BJ (cell line): ENCODE measurements at regions of chr22 and their contacts with region 1.

Region 1: DNA sequence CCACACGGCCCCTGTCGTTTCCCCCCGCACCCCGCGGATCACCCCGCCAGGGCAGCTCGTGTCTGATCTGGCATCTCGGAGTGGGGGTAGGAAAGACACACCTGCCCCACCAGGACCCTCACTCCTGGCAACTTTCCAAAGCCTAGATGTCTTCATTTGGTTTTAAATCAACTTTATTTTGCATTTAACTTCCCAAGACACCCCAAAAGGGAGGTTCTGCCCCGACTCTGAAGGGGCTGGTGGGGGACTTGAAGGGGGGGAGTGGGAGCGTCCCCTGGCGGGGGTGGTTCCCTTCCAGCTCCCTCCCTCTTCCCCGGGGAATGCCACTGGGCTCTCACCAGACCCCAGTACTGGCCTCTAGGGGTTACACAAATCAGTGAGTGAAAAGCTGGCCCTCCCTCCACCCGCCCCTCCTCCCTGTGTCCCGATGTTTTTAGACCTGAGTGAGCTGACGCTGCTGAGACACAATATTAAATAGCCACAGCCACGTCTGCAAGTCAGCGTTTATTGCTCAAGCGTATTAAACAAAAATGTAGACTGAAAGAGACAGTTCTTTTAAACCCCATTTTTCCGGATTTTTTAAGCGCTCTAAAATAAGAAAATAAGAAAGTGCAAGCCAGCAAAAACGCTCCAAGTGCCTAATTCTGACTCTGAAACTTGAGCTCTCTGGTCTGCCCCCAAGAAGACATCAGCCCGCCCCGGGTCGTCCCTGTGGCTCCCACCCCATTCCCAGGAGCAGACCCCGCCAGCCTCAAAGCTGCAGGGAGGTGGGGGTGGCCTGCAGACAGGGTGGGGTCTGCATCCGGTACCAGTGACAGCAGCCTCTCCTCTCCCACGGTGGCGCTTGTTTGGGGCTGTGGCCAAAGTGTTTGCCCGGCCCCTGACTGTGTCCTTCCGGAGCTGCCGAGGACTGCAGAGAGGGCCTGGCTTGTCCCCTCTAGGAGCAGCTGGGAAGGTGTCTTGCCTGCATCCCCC is 1.1 kb upstream of the TTLL8 start:
- DNase-seq: peak; percentile 4
- H3K4me3 ChIP-seq: no peak overlapping the region
- H3K27me3 ChIP-seq: peaks cover 7% of the 10 kb centered on the region
- CTCF ChIP-seq: peak; percentile 30; the same call in 1 of the 2 replicates

Region 2: DNA sequence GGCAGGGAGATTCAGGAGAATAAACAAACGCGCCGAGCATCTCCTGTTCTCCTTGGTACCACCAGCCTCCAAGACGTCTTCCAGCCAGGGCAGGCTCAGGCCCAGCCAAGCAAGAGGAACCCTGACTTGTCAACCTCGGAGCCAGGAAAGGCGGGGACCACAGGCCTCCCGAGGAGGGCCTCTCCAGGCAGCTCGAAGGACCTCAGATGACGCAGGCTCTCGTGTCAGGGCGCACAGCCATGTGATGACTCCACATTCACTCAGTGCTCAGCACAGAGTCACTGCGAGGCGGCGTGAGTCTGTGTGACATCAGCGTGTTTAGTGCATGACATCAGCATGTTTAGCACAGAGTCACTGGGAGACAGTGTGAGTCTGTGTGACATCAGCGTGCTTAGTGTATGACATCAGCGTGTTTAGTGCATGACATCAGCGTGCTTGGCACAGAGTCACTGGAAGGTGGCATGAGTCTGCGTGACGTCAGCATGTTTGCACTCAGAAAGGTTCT is 472.9 kb before region 1 on chr22:
- CTCF ChIA-PET with region 1: no interaction called
- POLR2A ChIA-PET with region 1: no interaction called
- DNase-seq: no peak
- H3K4me3 ChIP-seq: no peak overlapping the region
- H3K27me3 ChIP-seq: no peaks in the 10 kb centered on the region
- CTCF ChIP-seq: no peak

Region 3: DNA sequence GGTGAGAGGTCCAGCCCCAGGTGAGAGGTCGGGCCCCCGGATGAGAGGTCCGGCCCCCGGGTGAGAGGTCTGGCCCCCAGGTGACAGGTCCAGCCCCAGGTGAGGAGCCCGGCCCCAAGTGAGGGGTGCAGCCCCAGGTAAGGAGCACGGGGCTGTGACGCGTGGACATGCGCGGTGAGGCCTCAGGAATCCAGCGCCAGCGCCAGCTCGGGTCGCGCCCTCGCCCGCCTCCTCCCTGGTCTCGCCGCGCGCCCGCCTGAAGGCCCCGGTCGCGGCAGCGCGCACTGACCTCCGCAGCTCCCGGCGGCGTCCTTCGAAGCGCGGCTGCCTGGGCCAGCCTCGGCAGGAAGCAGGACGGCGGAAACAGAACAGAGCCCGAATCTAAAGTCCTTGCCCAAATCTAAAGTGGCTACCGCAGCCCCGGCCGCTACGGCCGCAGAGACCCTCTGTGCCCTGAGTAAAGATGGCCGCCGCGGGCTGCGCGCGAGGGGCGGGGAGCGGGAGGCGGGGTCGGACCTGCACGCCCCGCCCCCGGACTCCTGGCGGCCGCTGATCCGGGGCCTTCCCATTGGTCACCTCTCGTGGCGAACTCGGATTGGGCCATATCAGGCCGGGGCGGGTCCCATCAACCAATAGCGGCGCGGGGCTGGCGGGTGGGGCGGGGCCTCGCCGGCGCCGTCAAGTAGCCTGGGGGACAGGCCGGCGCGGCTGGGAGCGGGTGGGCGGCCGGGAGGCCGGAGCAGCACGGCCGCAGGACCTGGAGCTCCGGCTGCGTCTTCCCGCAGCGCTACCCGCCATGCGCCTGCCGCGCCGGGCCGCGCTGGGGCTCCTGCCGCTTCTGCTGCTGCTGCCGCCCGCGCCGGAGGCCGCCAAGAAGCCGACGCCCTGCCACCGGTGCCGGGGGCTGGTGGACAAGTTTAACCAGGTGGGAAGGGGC is 141.0 kb before region 1 on chr22 and contains the starts of genes ALG12 and CRELD2:
- CTCF ChIA-PET with region 1: no interaction called
- POLR2A ChIA-PET with region 1: interaction called, 21 read pairs
- DNase-seq: peak; percentile 76
- H3K4me3 ChIP-seq: peak within 1 kb of the TSS; percentile 87
- H3K27me3 ChIP-seq: no peaks in the 10 kb centered on the region
- CTCF ChIP-seq: no peak
- polyA plus RNA-seq, gene ALG12: 5.5 and 7.9 TPM in 2 replicates
- polyA plus RNA-seq, gene CRELD2: 41.0 and 54.1 TPM in 2 replicates

Region 4: DNA sequence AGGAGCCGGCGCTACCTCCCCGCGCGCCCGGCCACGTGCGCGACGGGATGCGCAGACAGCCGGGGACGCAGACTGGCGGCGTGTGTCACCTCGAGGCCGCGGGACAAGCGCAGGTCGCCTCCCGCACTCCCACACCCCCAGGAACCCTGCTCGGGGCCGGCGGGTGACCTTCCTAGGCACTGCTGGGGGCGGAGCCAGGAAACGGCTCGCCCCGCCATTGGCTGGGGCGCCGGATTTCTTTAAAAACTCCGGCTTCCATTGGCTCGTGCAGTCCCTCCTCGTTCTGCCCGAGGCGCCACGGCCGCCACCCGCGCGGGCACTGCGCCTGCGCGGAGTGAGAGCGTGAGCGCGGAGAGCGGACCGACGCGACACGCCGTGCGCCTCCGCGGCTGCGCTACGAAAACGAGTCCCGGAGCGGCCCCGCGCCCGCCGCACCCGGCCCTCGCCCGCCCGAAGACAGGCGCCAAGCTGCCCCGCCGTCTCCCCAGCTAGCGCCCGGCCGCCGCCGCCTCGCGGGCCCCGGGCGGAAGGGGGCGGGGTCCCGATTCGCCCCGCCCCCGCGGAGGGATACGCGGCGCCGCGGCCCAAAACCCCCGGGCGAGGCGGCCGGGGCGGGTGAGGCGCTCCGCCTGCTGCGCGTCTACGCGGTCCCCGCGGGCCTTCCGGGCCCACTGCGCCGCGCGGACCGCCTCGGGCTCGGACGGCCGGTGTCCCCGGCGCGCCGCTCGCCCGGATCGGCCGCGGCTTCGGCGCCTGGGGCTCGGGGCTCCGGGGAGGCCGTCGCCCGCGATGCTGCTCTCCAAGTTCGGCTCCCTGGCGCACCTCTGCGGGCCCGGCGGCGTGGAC is 98.8 kb before region 1 on chr22 and contains the start of gene PIM3:
- CTCF ChIA-PET with region 1: no interaction called
- POLR2A ChIA-PET with region 1: no interaction called
- DNase-seq: peak; percentile 73
- H3K4me3 ChIP-seq: peak within 1 kb of the TSS; percentile 90
- H3K27me3 ChIP-seq: no peaks in the 10 kb centered on the region
- CTCF ChIP-seq: no peak
- polyA plus RNA-seq, gene PIM3: 5.8 and 8.3 TPM in 2 replicates